BJ (cell line): ENCODE measurements at regions of chr11 and their contacts with region 1.

Region 1: DNA sequence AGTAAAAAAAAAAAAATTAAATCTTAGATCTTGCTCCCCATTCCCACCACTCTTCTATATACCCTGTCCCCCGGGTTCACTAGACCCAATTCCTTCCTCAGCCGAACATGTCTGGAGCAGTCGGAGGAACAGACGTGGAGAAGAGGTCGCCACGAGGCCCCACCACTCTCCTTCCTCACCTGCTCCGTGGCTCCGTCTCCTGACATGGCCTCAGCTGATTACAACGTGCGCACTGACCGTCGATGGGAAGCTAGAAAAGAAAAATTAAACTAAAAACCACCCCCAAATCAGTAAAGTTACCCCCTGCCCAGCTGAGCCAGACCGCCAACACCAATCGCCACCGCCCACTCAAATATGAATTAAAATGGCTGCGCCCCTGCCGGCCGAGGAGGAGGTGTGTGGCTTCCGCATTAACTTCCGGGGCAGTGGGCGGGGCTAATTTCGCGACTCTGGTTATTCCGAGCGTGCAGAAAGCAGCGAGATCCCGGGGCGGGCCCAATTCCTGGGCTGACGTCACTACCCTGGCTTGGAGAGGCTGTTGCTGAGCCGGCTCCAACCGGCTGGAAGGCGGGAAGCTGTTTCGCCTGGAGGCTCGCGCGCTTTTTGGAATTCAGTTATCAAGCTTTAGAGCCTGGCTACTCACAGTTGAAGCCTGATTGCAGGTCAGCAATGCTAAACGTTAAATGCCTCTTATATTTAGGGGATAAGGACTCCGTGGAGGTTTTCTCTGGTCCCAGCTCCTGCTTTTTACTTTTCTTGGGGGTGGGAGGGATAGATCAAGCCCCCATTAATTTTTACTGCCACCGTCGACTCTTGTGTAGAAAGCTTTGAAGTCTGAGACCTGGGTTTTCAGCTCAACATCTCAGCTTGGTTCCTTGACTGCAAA is at the start of gene CSTF3:
- DNase-seq: peak; percentile 92
- H3K4me3 ChIP-seq: peak within 1 kb of the TSS; percentile 96
- H3K27me3 ChIP-seq: no peaks in the 10 kb centered on the region
- CTCF ChIP-seq: peak; percentile 47
- polyA plus RNA-seq, gene CSTF3: 7.9 and 18.9 TPM in 2 replicates

Region 2: DNA sequence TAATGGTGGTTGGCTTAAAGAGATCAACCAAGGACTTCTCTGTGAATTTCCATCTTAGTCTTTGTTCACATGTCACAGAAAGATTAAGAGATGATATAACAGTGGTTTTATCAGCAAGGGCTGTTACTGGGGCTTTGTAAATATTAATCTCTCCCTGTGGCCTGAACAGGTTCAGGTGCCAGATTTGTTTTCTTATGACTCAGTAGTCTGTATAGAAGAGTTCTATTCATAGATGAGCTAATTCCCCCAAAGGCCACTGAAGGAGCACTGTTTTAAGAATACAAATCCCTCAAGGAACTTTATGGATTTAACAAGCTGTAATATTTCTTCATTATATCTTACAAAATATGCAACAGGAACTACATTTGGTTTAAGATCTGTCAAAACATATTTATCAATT is 71.6 kb before region 1 on chr11:
- CTCF ChIA-PET with region 1: no interaction called
- POLR2A ChIA-PET with region 1: no interaction called
- DNase-seq: no peak
- H3K4me3 ChIP-seq: no peak overlapping the region
- H3K27me3 ChIP-seq: no peaks in the 10 kb centered on the region
- CTCF ChIP-seq: no peak

Region 3: GRCh38 chr11:33234397-33235190 is 73.2 kb after region 1 on chr11:
- CTCF ChIA-PET with region 1: no interaction called
- POLR2A ChIA-PET with region 1: no interaction called
- DNase-seq: no peak
- H3K4me3 ChIP-seq: no peak overlapping the region
- H3K27me3 ChIP-seq: no peaks in the 10 kb centered on the region
- CTCF ChIP-seq: no peak

Region 4: DNA sequence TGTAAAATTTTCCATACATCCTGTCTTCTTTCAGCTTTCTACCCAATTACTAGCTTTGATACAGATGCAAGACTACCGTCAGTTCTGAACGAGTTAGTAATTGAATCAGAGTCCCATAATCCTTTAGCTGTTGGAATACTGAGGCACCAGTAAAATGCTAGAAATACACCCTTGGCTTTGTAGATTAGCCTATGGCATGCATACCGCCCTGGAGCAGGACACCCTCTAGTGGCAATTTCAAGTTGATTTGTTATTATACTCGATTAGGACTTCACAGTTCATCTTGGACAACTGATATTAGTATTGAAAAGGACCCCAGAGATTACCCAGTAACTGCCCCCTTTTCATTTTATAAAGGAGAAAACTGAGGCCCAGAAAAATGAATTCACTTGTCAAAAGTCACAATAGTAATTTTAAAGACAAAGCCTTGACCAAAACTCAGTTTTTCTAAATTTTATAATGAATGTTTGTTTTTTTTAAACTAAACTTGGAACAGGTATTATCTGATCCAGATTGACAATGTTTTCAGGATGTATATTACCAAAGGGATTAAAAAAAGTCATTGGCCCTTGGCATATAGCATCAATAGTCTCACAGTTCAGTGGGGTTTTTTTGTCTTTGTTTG is 168.5 kb after region 1 on chr11:
- CTCF ChIA-PET with region 1: interaction called, 48 read pairs
- POLR2A ChIA-PET with region 1: no interaction called
- DNase-seq: no peak
- H3K4me3 ChIP-seq: no peak overlapping the region
- H3K27me3 ChIP-seq: no peaks in the 10 kb centered on the region
- CTCF ChIP-seq: peak; percentile 68